PC-9 (cell line): ENCODE measurements at regions of chr6 and their contacts with region 1.

Region 1: DNA sequence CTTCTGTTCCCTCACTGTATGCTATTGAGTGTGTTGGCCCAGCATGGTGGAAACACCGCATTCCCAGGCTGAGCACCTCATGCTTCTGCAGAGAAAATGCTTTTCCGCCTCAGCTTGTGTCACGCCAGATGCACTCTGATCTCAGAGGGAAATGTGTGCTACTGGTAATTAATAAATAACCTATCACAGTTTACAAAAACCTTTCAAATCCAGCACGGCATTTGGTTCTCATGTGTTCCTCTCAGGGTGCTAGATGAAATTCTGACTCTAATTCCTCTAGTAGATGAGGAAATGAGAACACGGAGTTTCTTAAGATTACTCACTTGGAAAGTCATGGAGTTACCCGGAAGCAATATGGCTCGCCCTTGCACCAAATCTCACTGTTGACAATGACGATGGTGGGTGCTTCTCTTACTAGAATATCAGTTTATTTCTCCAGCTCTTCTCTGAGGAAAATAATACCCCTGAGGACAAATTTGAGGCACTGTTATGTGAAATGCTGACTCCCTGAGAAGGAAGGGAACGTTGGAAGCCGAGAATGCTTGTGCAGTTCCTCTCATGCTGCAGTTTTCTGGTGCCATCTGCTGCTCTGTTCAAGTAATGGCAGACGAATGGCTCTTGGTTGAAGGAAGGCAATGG is 116.6 kb downstream of the RNF144B start:
- DNase-seq: peak; percentile 61 to 63
- H3K4me3 ChIP-seq: peak overlapping the region; percentile 17; the same call in 1 of the 2 replicates
- H3K27ac ChIP-seq: no peak overlapping the region
- H3K4me1 ChIP-seq: peaks cover 12% of the 10 kb centered on the region; the same call in 1 of the 2 replicates
- H3K27me3 ChIP-seq: no peaks in the 10 kb centered on the region
- CTCF ChIP-seq: peak; percentile 95

Region 2: DNA sequence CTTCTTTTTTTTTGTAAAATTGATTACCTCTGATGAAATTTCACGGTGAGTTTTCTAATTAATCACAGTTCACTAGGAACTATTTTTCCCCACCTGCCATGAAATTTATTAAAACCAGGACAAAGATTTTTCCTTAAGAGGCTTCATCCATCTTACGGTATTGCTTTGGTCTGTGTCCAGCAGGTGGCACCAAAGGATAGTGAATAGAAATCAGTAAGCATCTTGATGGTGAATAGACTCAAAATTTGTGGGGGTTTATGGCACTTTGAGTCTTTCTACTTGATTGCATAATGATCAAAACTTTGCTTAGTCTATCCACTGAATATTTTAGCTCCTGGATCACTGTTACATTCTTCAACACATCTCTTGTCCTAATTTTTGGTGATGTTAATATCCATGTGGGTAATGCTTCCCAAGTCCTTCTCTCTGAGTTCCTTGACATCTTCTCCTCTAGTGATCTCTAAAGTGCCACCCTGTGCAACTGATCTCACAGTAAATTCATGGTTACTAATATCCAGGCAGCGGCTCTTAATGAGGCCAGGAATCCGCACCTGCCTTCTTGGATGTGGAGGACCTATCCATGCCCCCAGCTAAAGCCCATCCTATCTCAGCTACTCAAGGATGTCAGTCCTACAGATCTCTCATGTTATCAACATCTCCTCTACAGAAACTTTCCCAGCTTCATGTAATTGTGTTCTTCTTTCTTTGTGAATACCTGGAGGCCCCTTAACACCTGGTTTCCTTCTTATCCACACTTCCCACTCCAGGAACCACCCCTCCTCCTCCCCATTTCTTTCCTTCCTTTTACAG is 1347.4 kb before region 1 on chr6:
- CTCF ChIA-PET with region 1: no interaction called
- POLR2A ChIA-PET with region 1: no interaction called
- intact Hi-C with region 1: loop called (anchors 1 kb)
- DNase-seq: peak; percentile 49 to 56
- H3K4me3 ChIP-seq: no peak overlapping the region
- H3K27ac ChIP-seq: no peak overlapping the region
- H3K4me1 ChIP-seq: no peaks in the 10 kb centered on the region
- H3K27me3 ChIP-seq: no peaks in the 10 kb centered on the region
- CTCF ChIP-seq: peak; percentile 94

Region 3: DNA sequence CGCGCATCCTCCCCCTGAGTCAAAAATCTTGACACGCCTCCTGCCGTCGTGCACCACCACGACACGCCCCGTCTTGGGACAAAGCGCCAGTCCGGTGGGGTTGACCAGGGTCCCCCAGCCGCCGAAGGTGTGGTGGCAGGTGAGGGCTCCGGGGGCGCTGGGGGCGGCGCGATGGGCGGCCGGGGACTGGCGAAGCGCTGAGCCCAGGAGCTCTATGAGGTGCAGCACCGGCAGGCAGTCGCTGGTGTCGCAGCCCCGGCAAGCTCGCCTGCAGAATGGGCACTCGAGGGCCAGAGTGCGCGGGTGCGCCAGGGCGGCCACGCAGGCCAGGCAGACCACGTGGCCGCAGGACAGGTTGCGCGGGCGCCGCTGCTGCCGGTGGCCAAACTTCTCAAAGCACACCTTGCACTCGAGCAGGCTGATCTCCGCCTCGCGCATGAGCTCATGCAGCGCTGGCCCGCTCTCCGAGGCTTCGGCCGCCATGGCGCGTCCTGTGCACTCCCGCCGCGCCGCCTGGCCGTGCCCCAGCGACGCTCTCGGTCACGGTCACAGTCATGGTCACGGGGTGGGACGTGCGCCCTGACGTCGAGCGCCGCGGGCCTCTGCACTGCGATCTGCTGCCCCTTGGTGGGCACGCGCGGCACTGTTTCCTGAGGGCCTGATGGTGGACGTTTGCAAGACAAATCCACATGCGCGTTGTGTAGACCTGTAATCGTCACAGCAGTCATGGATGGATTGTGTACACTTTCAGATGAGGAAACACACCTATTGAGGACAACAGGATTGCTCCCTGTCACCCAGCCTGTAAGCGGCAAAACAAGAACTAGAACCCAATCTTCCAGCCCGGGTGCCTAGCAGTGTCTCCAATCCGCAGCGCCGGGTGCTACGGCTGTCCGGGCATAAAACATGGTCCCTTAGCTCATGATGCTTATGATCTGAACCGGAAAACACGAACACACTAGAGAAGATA is 381.3 kb before region 1 on chr6 and contains the start of gene NHLRC1:
- CTCF ChIA-PET with region 1: no interaction called
- POLR2A ChIA-PET with region 1: no interaction called
- intact Hi-C with region 1: loop called (anchors 1 kb)
- DNase-seq: peak; percentile 42 to 88
- H3K4me3 ChIP-seq: peak within 1 kb of the TSS; percentile 19; the same call in 1 of the 2 replicates
- H3K27ac ChIP-seq: no peak within 1 kb of the TSS
- H3K4me1 ChIP-seq: no peaks in the 10 kb centered on the region
- H3K27me3 ChIP-seq: no peaks in the 10 kb centered on the region
- CTCF ChIP-seq: peak; percentile 76
- total RNA-seq, gene NHLRC1: 0.90 and 1.0 TPM in 2 replicates

Region 4: DNA sequence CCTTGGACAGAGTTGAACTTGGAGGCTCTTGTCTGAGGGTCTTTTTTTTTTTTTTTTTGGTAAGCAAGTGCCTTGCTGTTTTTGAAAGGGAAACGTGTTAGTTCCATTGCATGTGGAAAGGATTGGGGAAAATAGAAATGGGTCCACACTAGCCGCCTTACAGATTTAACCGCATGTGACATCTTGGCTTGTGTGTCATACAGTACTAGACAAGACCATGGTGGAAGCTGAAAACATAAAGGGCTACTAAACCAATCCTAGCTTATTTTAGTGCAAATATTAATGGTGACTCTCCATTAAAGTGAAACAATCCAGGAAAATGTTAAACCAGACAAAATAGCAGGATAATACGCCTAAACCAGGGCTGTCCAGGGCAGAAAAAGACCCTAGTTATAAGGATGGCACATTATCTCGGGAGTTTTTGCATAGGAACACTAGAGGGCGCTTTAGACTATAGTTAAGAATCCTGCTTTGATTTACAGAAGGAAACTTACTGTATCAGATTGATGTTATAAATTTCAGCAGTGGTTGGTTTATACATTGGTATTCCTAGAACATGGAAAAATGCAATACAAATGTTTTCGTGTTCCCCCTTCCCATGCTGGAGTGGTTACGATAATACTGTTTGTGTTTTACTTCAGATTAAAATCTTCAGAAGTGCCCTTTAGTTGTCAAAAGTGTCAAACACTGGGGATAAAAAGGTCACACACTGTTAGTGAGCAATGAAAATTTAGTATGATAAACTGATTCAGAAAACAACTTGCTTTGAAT is 179.6 kb before region 1 on chr6:
- CTCF ChIA-PET with region 1: interaction called, 7 read pairs
- POLR2A ChIA-PET with region 1: no interaction called
- intact Hi-C with region 1: loop called (anchors 1 kb)
- DNase-seq: peak; percentile 27 to 51
- H3K4me3 ChIP-seq: no peak overlapping the region
- H3K27ac ChIP-seq: no peak overlapping the region
- H3K4me1 ChIP-seq: no peaks in the 10 kb centered on the region
- H3K27me3 ChIP-seq: no peaks in the 10 kb centered on the region
- CTCF ChIP-seq: peak; percentile 85

Region 5: GRCh38 chr6:18406955-18407749 is 96.6 kb before region 1 on chr6:
- CTCF ChIA-PET with region 1: interaction called, 3 read pairs
- POLR2A ChIA-PET with region 1: interaction called, 37 read pairs
- intact Hi-C with region 1: no loop called
- DNase-seq: no peak
- H3K4me3 ChIP-seq: no peak overlapping the region
- H3K27ac ChIP-seq: no peak overlapping the region
- H3K4me1 ChIP-seq: peaks cover 13% of the 10 kb centered on the region
- H3K27me3 ChIP-seq: no peaks in the 10 kb centered on the region
- CTCF ChIP-seq: no peak